Sciatic nerve (tissue), 2 donors: ENCODE measurements at regions of chr16 and their contacts with region 1.

Region 1: DNA sequence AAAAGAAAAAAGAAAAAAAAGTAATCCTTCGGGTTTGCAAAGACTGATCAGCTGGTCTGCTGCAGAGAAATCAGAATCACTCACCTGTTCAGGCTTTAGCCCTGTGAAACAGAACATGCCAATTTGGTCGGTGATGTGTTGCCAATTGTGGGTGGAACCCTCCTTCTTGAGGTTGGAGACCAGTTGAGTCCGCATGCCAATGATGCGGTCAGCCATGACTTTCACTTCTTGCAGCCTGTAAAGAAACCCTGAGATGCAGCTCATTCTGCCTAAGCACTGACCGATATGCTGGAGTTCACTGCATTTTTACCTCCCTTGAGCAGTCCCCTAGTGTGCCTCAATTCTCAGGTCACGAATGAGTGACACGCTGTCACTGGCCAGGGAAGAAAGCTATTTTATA is 24.8 kb upstream of the SLC38A7 start:
- DNase-seq: no peak
- ATAC-seq: no peak

Region 2: DNA sequence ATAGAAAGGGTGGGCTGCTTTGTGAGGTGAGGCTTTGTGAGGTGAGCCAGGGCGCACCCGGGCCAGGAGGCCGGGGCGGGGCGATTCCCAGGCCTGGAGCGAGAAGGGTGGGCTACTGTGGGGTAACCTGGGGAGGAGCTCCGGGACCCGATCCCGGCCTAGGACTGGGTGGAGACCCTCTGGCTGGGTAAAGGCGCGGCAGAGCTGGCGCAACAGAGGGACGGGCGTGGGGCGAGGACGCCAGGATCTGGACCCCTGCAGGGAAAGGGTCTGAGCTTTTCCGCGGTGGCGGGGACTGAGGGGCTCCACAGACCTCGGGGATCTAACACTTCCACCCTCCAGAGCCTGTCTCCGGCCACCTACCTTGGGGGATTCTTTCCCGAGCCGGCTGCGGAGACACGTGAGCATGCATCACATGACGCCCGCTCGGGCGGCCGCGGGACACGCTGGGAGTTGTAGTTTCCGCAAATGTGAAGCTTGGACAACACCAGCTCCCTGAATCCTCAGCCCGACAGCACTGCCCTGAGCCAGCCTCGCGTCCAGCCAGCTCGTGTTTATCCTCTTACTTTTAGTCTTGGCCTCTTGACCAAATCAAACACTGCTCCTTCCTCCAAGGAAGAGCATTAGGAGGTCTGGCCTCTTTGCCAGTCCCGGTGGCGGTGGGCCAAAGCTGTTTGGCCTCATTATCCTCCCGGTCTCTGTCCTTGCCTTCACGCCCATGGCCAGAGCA is 24.8 kb before region 1 on chr16 and contains the start of gene SLC38A7:
- intact Hi-C with region 1: loop called (anchors 1 kb)
- DNase-seq: peak; percentile 92
- ATAC-seq: peak; percentile 97
- total RNA-seq, gene SLC38A7: 15.6 TPM